GM10248 (cell line): ENCODE measurements at regions of chr19 and their contacts with region 1.

Region 1: GRCh38 chr19:3721131-3721886 is 13.1 kb downstream of the TJP3 start:
- DNase-seq: peak; percentile 91
- CTCF ChIP-seq: no peak

Region 2: GRCh38 chr19:3700221-3701032 is 20.9 kb before region 1 on chr19 and contains the start of gene PIP5K1C:
- CTCF ChIA-PET with region 1: interaction called, 19 read pairs
- POLR2A ChIA-PET with region 1: no interaction called
- DNase-seq: peak; percentile 97
- CTCF ChIP-seq: peak; percentile 84

Region 3: DNA sequence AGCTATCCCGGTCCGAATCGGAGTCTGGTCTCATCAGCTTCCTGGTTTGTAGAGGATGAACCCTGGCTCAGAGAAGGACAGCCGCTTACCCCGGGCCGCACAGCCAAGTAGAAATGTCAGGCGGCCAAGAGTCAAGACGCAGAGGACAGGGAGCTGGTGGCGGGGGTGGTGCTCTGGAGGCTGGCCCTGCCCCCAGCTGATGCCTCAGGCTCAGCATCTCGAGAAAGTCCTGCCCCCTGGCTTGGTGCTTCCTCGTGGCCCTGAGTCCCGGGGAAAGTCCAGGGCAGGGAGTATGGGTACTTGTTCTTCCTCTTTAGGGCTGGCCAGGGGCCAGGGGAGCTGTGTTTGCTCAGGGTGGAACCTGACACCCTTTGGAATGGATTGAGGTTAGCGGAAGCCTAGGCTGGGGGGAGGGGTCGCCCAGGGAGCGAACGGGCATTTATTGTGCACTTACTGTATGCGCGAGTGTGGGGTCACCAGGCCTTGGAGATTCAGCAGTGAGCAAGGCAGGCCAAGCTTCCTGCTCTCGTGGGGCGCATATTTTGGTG is 11.0 kb before region 1 on chr19:
- CTCF ChIA-PET with region 1: interaction called, 13 read pairs
- POLR2A ChIA-PET with region 1: no interaction called
- DNase-seq: no peak
- CTCF ChIP-seq: no peak

Region 4: DNA sequence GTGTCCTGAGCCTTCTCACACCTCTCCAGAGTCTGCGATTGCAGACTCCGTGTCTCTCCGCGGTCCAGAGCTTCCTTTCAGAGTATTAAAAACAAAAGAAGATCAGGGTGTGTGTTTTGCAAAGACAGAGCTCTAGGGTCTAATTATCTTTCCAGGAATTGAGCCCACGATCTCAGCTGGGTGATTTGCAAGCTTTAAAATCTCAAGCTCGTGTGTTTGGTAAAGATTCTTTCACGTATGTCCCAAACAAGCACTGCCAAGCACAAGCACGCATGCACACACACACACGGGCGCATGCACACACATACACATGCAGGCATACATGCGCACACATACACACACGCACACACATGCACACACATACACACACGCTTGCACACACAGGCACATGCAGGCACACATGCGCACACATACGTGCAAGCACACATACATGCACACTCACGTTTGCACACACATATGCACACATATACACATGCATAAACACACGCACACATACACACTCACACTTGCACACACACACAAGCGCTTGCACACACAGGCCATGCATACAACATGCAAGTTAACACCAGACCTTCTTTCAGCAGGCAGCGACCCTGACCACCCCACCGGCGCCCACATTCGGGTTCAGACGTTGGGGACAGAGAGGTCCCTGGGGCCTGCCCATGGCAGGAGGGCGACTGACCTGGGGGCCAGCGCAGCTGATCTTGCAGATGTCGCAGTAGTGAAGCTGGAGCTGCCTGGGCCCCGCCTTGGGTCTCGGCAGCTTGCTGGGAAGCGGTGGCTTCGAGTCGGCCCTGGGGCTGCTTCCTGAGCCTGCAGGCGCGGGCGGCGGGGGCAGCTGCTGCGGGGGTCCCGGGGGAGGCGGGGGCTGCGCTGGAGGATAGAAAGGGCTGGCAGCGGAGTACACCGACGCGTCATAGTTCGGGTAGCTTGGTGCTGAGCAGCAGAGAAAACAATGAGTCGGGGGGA is 109.6 kb after region 1 on chr19:
- CTCF ChIA-PET with region 1: no interaction called
- POLR2A ChIA-PET with region 1: no interaction called
- DNase-seq: no peak
- CTCF ChIP-seq: no peak